ENCODE measurements at regions of chr2 and their contacts with region 1.

Region 1: GRCh38 chr2:1769703-1770422 is 25.5 kb upstream of the PXDN start:
- DNase-seq: peak; percentile 76
- ATAC-seq: peak; percentile 53
- H3K4me3 Mint-ChIP-seq: no peak overlapping the region
- H3K27ac Mint-ChIP-seq: no peak overlapping the region
- H3K4me1 Mint-ChIP-seq: no peaks in the 10 kb centered on the region
- H3K27me3 Mint-ChIP-seq: peaks cover 2% of the 10 kb centered on the region
- CTCF ChIP-seq: peak; percentile 66

Region 2: GRCh38 chr2:1681323-1682180 is 88.3 kb before region 1 on chr2:
- CTCF ChIA-PET with region 1: no interaction called
- POLR2A ChIA-PET with region 1: no interaction called
- intact Hi-C with region 1: no loop called
- DNase-seq: no peak
- ATAC-seq: no peak
- H3K4me3 Mint-ChIP-seq: no peak overlapping the region
- H3K27ac Mint-ChIP-seq: no peak overlapping the region
- H3K4me1 Mint-ChIP-seq: no peaks in the 10 kb centered on the region
- H3K27me3 Mint-ChIP-seq: peaks cover under 1% of the 10 kb centered on the region
- CTCF ChIP-seq: no peak

Region 3: DNA sequence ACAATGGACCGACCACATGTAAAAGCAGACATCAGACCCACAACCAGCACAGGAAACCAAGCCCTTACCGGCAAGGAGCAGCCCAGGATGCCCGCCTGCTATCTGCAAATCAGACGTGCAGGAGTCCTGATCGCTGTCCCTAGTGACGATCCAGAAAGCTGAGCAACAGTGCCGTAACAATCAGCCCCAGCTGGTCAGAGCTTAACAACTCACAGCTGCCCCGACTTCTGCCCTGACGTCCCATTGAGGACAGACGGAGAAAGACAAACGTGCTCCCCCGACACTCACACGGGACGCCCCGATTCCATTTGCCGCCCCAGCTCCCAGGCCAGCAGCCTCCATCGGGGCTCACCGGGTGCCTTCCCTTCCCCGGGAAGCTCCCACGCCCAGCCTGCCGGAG is 14.2 kb after region 1 on chr2:
- CTCF ChIA-PET with region 1: interaction called, 11 read pairs
- POLR2A ChIA-PET with region 1: no interaction called
- intact Hi-C with region 1: no loop called
- DNase-seq: no peak
- ATAC-seq: no peak
- H3K4me3 Mint-ChIP-seq: no peak overlapping the region
- H3K27ac Mint-ChIP-seq: no peak overlapping the region
- H3K4me1 Mint-ChIP-seq: no peaks in the 10 kb centered on the region
- H3K27me3 Mint-ChIP-seq: peaks cover 8% of the 10 kb centered on the region
- CTCF ChIP-seq: no peak

Measured in activated CD8-positive, alpha-beta T cell treated with anti-CD3 and anti-CD28 coated beads for 36 hours (primary cell).